CD8-positive, alpha-beta memory T cell (primary cell): ENCODE measurements at regions of chr3 and their contacts with region 1.

Region 1: DNA sequence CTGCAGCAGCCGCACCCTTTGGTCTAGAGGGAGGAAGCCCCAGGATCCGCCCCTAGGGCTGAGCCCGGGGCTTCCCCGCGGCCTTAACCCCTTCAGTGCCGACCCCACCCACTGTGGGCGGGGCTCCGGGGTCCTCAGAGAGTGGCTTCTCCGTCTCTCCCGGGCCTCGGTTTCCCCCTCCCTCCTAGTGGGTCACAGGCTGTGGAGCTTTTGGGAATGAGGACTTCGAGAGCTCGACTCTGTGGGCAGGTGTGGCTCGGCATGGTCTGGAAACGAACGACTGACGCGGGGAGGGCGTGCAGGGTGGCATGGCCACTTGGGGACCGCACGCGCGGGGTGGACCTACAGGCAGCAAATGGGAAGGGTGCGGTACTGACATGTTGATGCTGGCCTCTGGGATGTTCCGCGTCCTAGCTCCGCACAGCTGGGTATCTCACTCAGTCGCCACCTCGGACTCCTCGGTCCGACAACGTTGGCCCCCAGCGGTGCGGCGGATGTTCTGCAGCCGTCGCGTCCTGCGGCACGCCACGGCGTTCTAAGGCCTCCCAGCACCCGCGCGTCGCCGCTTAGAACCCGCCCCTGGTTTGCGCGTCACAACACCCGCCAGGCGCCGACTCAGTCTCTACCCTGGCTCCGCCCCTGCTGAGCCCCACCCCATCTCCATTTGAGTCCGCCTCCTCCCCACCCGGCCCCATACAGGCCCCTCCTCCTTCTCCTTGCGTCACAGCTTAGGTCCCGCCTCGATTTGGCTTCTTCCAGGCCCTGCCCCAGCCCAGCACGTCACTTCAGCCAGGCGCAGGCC is at the starts of genes HYAL3 and NAA80:
- DNase-seq: peak; percentile 98 to 100 (median 99)
- H3K4me3 ChIP-seq: peak within 1 kb of the TSS; percentile 89
- H3K4me3 Mint-ChIP-seq: peak within 1 kb of the TSS; percentile 93 to 98 (median 95)
- H3K27ac ChIP-seq: peak within 1 kb of the TSS; percentile 96
- H3K27ac Mint-ChIP-seq: peak within 1 kb of the TSS; percentile 97 to 100 (median 99)
- H3K4me1 ChIP-seq: peaks cover 25% of the 10 kb centered on the region
- H3K4me1 Mint-ChIP-seq: peaks cover 21 to 50% (median 22%) of the 10 kb centered on the region in 3 donors
- H3K27me3 ChIP-seq: no peaks in the 10 kb centered on the region
- H3K27me3 Mint-ChIP-seq: no peaks in the 10 kb centered on the region
- total RNA-seq, gene HYAL3: 7.7 to 8.4 TPM
- total RNA-seq, gene NAA80: 17.3 to 18.3 TPM

Region 2: DNA sequence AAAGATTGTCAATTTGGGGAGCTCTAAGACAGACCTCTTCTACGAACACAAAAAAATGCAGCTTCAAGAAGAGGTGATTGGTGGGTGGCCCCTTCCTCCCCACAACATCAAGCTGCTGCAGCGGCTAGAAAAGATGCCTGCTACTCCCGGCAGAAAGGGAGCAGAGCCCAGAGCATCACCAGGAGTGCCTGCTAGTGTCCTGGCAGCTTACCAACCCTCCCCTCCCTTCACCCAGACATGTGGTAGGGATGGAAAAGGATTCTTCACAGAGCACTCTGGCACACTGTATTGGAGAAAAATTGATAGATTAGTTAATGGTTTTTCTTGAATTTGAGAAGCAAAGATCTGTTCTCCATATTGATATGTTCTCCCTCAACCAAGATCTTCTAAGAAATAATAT is 523.5 kb before region 1 on chr3:
- CTCF ChIA-PET with region 1: no interaction called
- POLR2A ChIA-PET with region 1: no interaction called
- DNase-seq: no peak
- H3K4me3 ChIP-seq: no peak overlapping the region
- H3K4me3 Mint-ChIP-seq: no peak overlapping the region
- H3K27ac ChIP-seq: no peak overlapping the region
- H3K27ac Mint-ChIP-seq: peak overlapping the region in 1 of 8 donors; percentile 70
- H3K4me1 ChIP-seq: peaks cover 13% of the 10 kb centered on the region
- H3K4me1 Mint-ChIP-seq: peaks cover 38 to 63% (median 47%) of the 10 kb centered on the region in 3 donors
- H3K27me3 ChIP-seq: no peaks in the 10 kb centered on the region
- H3K27me3 Mint-ChIP-seq: no peaks in the 10 kb centered on the region

Region 3: DNA sequence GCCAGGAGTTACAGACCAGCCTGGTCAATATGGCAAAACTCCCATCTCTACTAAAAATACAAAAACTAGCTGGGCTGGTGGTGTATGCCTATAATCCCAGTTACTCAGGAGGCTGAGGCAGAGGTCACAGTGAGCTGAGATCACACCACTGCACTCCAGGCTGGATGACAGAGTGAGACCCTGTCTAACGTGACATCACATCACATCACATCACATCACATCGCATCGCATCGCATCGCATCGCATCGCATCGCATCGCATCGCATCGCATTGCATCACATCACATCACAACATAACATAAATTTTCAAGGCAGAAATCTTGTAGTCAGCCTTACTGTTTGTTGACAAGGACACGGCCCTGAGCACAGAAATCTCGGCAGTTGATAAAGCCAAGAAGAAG is 314.6 kb before region 1 on chr3:
- CTCF ChIA-PET with region 1: no interaction called
- POLR2A ChIA-PET with region 1: no interaction called
- DNase-seq: no peak
- H3K4me3 ChIP-seq: no peak overlapping the region
- H3K4me3 Mint-ChIP-seq: no peak overlapping the region
- H3K27ac ChIP-seq: no peak overlapping the region
- H3K27ac Mint-ChIP-seq: no peak overlapping the region
- H3K4me1 ChIP-seq: no peaks in the 10 kb centered on the region
- H3K4me1 Mint-ChIP-seq: peaks cover 0 to 10% (median 7%) of the 10 kb centered on the region in 3 donors
- H3K27me3 ChIP-seq: no peaks in the 10 kb centered on the region
- H3K27me3 Mint-ChIP-seq: no peaks in the 10 kb centered on the region

Region 4: GRCh38 chr3:50320853-50321335 is 21.9 kb after region 1 on chr3:
- CTCF ChIA-PET with region 1: interaction called, 16 read pairs
- POLR2A ChIA-PET with region 1: interaction called, 31 read pairs
- DNase-seq: peak in 4 of 5 donors; percentile 46 to 72 (median 54)
- H3K4me3 ChIP-seq: peak overlapping the region; percentile 91
- H3K4me3 Mint-ChIP-seq: peak overlapping the region; percentile 85 to 94 (median 92)
- H3K27ac ChIP-seq: peak overlapping the region; percentile 88
- H3K27ac Mint-ChIP-seq: peak overlapping the region; percentile 73 to 93 (median 87)
- H3K4me1 ChIP-seq: peaks cover 35% of the 10 kb centered on the region
- H3K4me1 Mint-ChIP-seq: peaks cover 37 to 62% (median 48%) of the 10 kb centered on the region in 3 donors
- H3K27me3 ChIP-seq: no peaks in the 10 kb centered on the region
- H3K27me3 Mint-ChIP-seq: peaks cover 0 to 3% of the 10 kb centered on the region in 2 donors

Region 5: GRCh38 chr3:50327943-50328691 is 29.1 kb after region 1 on chr3 and contains the start of gene TUSC2:
- CTCF ChIA-PET with region 1: interaction called, 10 read pairs
- POLR2A ChIA-PET with region 1: interaction called, 10 read pairs
- DNase-seq: peak; percentile 92 to 96 (median 93)
- H3K4me3 ChIP-seq: peak within 1 kb of the TSS; percentile 70
- H3K4me3 Mint-ChIP-seq: peak within 1 kb of the TSS; percentile 82 to 97 (median 91)
- H3K27ac ChIP-seq: peak within 1 kb of the TSS; percentile 71
- H3K27ac Mint-ChIP-seq: peak within 1 kb of the TSS; percentile 77 to 96 (median 94)
- H3K4me1 ChIP-seq: peaks cover 19% of the 10 kb centered on the region
- H3K4me1 Mint-ChIP-seq: peaks cover 26 to 47% (median 31%) of the 10 kb centered on the region in 3 donors
- H3K27me3 ChIP-seq: no peaks in the 10 kb centered on the region
- H3K27me3 Mint-ChIP-seq: peaks cover 0 to 1% of the 10 kb centered on the region in 2 donors
- total RNA-seq, gene TUSC2: 31.4 to 36.6 TPM

Region 6: DNA sequence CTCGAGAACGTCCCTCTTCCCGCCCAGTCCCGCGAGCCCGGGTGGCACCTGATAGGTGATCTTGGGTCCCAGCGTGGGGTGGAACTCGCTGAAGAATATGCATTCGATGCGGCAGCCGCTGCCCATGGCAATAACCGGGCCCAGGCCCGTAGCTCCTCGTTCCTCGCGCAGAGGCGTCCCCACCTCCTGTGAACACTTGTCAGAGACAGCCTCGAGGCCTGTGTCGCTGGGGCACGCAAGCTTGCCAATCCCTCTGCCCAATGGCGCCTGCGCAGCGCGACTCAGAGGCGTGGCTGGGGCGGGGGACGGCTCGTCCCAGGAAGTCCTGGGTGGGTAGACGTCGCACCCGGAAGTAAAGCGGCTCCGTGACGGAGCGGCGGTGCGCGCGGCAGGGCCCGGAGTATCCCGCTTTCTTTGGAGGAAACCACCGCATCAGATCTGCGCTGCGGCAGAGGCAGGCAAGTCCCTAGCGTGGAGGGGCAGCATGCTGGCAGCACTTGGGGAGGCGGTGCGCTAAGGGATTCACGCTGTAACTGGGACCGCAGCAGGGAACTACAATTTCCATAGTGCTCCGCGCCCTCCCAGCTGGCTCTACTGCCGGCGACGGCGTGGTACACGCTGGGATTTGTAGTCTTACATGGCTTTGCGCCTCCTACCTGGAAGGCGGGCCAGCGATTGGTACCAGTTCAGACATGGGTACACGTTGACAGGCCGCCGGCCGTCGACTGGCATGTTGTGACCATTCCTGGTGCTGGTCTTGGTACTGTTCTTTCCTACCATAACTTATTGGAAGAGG is 51.7 kb after region 1 on chr3 and contains the starts of genes CYB561D2 and NPRL2:
- CTCF ChIA-PET with region 1: interaction called, 13 read pairs
- POLR2A ChIA-PET with region 1: interaction called, 9 read pairs
- DNase-seq: peak; percentile 98 to 100 (median 99)
- H3K4me3 ChIP-seq: peak within 1 kb of the TSS; percentile 100
- H3K4me3 Mint-ChIP-seq: peak within 1 kb of the TSS; percentile 96 to 99 (median 98)
- H3K27ac ChIP-seq: peak within 1 kb of the TSS; percentile 95
- H3K27ac Mint-ChIP-seq: peak within 1 kb of the TSS; percentile 97 to 99 (median 98)
- H3K4me1 ChIP-seq: peaks cover 55% of the 10 kb centered on the region
- H3K4me1 Mint-ChIP-seq: peaks cover 48 to 82% (median 52%) of the 10 kb centered on the region in 3 donors
- H3K27me3 ChIP-seq: no peaks in the 10 kb centered on the region
- H3K27me3 Mint-ChIP-seq: no peaks in the 10 kb centered on the region
- total RNA-seq, gene CYB561D2: 32.4 to 37.7 TPM
- total RNA-seq, gene NPRL2: 44.6 to 48.0 TPM